ENCODE measurements at regions of chr5 and their contacts with region 1.

Region 1: GRCh38 chr5:175534070-175534932 is 55.9 kb downstream of the SFXN1 start:
- DNase-seq: peak; percentile 74 to 84 (median 77)
- ATAC-seq: peak; percentile 99
- H3K4me3 ChIP-seq: no peak overlapping the region
- H3K27ac ChIP-seq: no peak overlapping the region
- H3K4me1 ChIP-seq: peaks cover 0 to 5% of the 10 kb centered on the region in 2 experiments; a peak in 3 of 5 replicates
- H3K27me3 ChIP-seq: peaks cover 0 to 2% of the 10 kb centered on the region in 2 experiments; a peak in 1 of 5 replicates
- CTCF ChIP-seq: peak; percentile 100
- EP300 ChIP-seq: no peak
- POLR2A ChIP-seq: no peak
- RAD21 ChIP-seq: peak; percentile 99

Region 2: GRCh38 chr5:175418285-175418684 is 116.0 kb before region 1 on chr5:
- CTCF ChIA-PET with region 1: no interaction called
- POLR2A ChIA-PET with region 1: no interaction called
- in situ Hi-C with region 1: no loop called
- intact Hi-C with region 1: no loop called
- DNase-seq: no peak
- ATAC-seq: no peak
- H3K4me3 ChIP-seq: no peak overlapping the region
- H3K27ac ChIP-seq: no peak overlapping the region
- H3K4me1 ChIP-seq: no peaks in the 10 kb centered on the region
- H3K27me3 ChIP-seq: no peaks in the 10 kb centered on the region
- CTCF ChIP-seq: no peak
- EP300 ChIP-seq: no peak
- POLR2A ChIP-seq: no peak
- RAD21 ChIP-seq: no peak

Region 3: DNA sequence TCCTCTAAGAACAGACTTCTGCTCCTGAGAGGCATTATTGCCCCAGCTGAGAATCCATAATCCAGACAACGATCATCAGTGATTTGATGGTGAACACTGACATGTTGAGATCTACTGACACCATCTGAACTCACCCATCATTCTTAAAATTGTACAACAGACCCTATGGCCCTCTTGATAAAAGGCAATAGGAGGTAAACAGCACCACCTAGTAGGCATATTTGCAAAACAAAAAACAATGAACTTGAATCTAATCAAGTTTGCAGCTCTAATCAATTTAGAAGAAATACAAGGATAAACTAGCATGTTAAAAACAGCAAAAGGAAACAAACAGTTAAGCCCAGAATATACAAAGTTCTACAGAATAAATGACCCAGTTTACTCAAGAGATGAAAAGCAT is 33.7 kb after region 1 on chr5:
- CTCF ChIA-PET with region 1: interaction called, 12 read pairs
- POLR2A ChIA-PET with region 1: no interaction called
- in situ Hi-C with region 1: no loop called
- intact Hi-C with region 1: loop called (anchors 1 kb)
- DNase-seq: no peak
- ATAC-seq: no peak
- H3K4me3 ChIP-seq: no peak overlapping the region
- H3K27ac ChIP-seq: no peak overlapping the region
- H3K4me1 ChIP-seq: no peaks in the 10 kb centered on the region
- H3K27me3 ChIP-seq: peaks cover 10 to 40% of the 10 kb centered on the region in 2 experiments; a peak in 4 of 5 replicates
- CTCF ChIP-seq: peak; percentile 21 to 50 (median 28); a peak in 2 of 6 replicates
- EP300 ChIP-seq: no peak
- POLR2A ChIP-seq: no peak
- RAD21 ChIP-seq: peak in 1 of 2 experiments; percentile 68; a peak in 2 of 4 replicates

Region 4: GRCh38 chr5:175690025-175690424 is 155.7 kb after region 1 on chr5:
- CTCF ChIA-PET with region 1: no interaction called
- POLR2A ChIA-PET with region 1: no interaction called
- in situ Hi-C with region 1: loop called (anchors 5 kb)
- intact Hi-C with region 1: loop called (anchors 2 kb)
- DNase-seq: no peak
- ATAC-seq: no peak
- H3K4me3 ChIP-seq: no peak overlapping the region
- H3K27ac ChIP-seq: no peak overlapping the region
- H3K4me1 ChIP-seq: peaks cover 0 to 10% of the 10 kb centered on the region in 2 experiments; a peak in 2 of 5 replicates
- H3K27me3 ChIP-seq: peaks cover 26 to 72% of the 10 kb centered on the region in 2 experiments
- CTCF ChIP-seq: no peak
- EP300 ChIP-seq: no peak
- POLR2A ChIP-seq: no peak
- RAD21 ChIP-seq: no peak

Region 5: DNA sequence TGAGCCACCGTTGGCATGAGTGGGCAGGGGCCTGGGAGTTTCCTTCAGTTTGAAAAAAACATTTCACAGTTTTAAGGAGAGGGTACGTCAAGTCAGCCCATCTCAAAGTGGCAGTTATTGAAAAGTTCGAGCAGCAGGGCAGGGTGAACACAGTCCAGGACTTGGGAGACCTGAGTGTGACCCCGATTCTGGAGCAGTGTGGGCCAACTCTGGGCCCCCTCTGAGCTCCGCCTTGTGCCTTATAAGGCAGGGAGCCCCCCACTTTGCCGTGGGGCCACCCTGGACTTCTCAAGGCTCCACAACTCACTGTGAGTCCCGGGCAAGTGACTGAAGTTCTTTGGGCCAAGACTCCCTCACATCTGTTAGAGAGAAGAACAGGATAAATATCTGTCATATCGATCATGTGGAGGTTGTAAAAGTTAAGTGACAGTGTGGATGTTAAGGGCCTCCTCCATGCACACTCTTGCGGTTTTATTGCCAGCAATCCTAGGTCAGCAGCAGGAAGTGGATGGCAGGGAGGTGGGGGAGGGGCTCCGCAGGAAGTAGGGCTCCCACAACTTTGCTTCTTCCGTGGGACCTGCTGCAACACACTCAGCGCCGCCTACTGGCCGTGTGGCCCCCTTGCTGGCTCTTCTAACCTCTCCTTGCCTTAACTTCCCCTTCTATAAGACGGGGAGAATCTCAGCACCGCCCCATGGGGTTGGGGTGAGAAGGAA is 162.0 kb after region 1 on chr5:
- CTCF ChIA-PET with region 1: interaction called, 29 read pairs
- POLR2A ChIA-PET with region 1: no interaction called
- in situ Hi-C with region 1: loop called (anchors 5 kb)
- intact Hi-C with region 1: loop called (anchors 1 kb)
- DNase-seq: peak; percentile 64 to 84 (median 73)
- ATAC-seq: peak; percentile 87
- H3K4me3 ChIP-seq: no peak overlapping the region
- H3K27ac ChIP-seq: no peak overlapping the region
- H3K4me1 ChIP-seq: peaks cover 4 to 5% of the 10 kb centered on the region in 2 experiments; a peak in 3 of 5 replicates
- H3K27me3 ChIP-seq: peaks cover 18 to 47% of the 10 kb centered on the region in 2 experiments; a peak in 4 of 5 replicates
- CTCF ChIP-seq: peak; percentile 72 to 80 (median 77)
- EP300 ChIP-seq: no peak
- POLR2A ChIP-seq: no peak
- RAD21 ChIP-seq: peak; percentile 30 to 68

Region 6: DNA sequence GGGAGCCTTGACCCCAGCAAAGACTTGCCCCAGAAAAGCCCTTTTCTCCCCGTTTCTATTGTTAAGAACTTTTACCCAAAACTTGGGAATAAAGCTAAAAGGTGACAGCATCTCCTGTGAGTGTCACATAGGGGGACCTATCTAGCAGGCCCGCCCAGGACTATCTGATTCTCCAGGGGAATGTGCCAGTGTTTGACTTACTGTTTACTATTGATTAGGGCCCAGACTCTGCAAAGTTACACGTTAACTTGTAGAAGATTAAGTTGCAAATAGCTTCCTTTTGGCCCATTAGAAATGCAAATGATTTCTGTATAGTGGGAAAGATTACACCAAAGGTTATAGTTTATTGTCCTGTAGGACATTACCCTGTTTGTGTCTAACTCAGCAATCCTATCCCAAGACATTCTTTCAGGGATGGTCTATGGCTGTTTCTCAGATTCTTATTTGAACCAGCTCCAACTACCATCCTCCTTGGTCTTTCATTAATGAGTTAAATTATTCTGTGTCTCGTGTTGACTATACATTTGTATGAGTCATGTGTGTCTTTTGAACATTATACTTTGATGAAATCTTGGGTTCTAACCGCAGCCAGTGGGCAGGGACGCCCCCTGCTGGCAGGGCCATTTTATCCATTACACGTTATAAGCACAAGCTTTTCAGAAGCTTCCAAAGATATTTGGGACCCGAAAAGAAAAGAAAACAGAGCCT is 184.3 kb after region 1 on chr5:
- CTCF ChIA-PET with region 1: interaction called, 39 read pairs
- POLR2A ChIA-PET with region 1: interaction called, 4 read pairs
- in situ Hi-C with region 1: no loop called
- intact Hi-C with region 1: loop called (anchors 2 kb)
- DNase-seq: peak; percentile 31 to 58 (median 54)
- ATAC-seq: peak; percentile 63; the same call in 2 of the 3 replicates
- H3K4me3 ChIP-seq: no peak overlapping the region
- H3K27ac ChIP-seq: no peak overlapping the region
- H3K4me1 ChIP-seq: no peaks in the 10 kb centered on the region
- H3K27me3 ChIP-seq: peaks cover 0 to 8% of the 10 kb centered on the region in 2 experiments; a peak in 1 of 5 replicates
- CTCF ChIP-seq: peak; percentile 69 to 74 (median 73)
- EP300 ChIP-seq: no peak
- POLR2A ChIP-seq: no peak
- RAD21 ChIP-seq: peak; percentile 32 to 64

Region 7: DNA sequence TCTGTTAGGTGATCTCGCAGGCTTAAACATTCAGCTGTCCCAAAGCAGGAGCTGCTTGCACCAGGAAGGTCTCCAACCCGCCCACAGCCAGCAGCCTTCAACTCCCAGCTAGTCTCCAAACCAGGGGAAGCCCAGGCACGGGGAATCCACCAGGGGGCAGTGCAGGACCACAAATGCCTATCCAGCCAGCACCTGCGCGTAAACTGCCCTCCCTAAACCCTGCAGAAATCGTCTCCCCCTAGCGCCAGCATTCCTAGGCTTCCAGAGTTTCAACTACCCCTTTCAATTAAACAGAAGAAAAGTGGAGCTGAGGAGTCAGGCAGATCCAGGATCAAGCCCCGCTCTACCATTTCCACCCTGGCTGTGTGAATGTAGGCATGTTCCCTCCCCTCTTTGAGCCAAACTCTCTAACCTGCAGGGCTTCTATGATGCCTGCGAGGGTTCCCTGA is 195.6 kb after region 1 on chr5:
- CTCF ChIA-PET with region 1: interaction called, 18 read pairs
- POLR2A ChIA-PET with region 1: interaction called, 3 read pairs
- in situ Hi-C with region 1: no loop called
- intact Hi-C with region 1: no loop called
- DNase-seq: peak; percentile 88 to 93 (median 92)
- ATAC-seq: peak; percentile 99
- H3K4me3 ChIP-seq: no peak overlapping the region
- H3K27ac ChIP-seq: no peak overlapping the region
- H3K4me1 ChIP-seq: peaks cover 0 to 7% of the 10 kb centered on the region in 2 experiments; a peak in 2 of 5 replicates
- H3K27me3 ChIP-seq: peaks cover 0 to 36% of the 10 kb centered on the region in 2 experiments; a peak in 2 of 5 replicates
- CTCF ChIP-seq: peak; percentile 98 to 99 (median 98)
- EP300 ChIP-seq: no peak
- POLR2A ChIP-seq: no peak
- RAD21 ChIP-seq: peak; percentile 97 to 98

Region 8: DNA sequence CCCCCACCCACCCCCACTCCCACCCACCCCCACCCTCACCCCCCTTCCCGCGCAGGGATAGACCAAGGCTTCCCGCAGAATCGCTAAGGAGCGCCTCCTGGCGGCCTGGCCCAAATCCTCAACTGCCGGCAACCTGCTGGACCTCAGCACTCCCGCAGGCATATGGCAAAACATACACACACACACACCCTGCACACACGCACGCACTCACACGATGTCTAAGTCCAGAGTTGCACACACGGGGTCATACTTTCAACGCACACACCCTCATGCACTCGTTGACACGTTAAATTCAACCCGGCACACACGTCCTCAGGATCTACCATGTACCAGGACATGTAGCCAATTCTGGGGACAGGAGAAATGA is 338.8 kb after region 1 on chr5:
- CTCF ChIA-PET with region 1: interaction called, 3 read pairs
- POLR2A ChIA-PET with region 1: no interaction called
- in situ Hi-C with region 1: no loop called
- intact Hi-C with region 1: loop called (anchors 10 kb)
- DNase-seq: peak; percentile 30 to 54 (median 44)
- ATAC-seq: peak; percentile 73
- H3K4me3 ChIP-seq: no peak overlapping the region
- H3K27ac ChIP-seq: no peak overlapping the region
- H3K4me1 ChIP-seq: peaks cover 0 to 14% of the 10 kb centered on the region in 2 experiments; a peak in 2 of 5 replicates
- H3K27me3 ChIP-seq: peaks cover 0 to 2% of the 10 kb centered on the region in 2 experiments; a peak in 1 of 5 replicates
- CTCF ChIP-seq: peak; percentile 38 to 59 (median 46)
- EP300 ChIP-seq: no peak
- POLR2A ChIP-seq: no peak
- RAD21 ChIP-seq: 0 out of 4 replicates have a peak, but pooled peaks of 1 of the 2 experiments have one; percentile 14